PC-9 (cell line): ENCODE measurements at regions of chr3 and their contacts with region 1.

Region 1: GRCh38 chr3:105366326-105367062 is at the start of gene ALCAM:
- DNase-seq: peak; percentile 93 to 99
- H3K4me3 ChIP-seq: peak within 1 kb of the TSS; percentile 78
- H3K27ac ChIP-seq: peak within 1 kb of the TSS; percentile 86
- H3K4me1 ChIP-seq: peaks cover 29% of the 10 kb centered on the region
- H3K27me3 ChIP-seq: no peaks in the 10 kb centered on the region
- CTCF ChIP-seq: peak; percentile 70
- total RNA-seq, gene ALCAM: 110 and 132 TPM in 2 replicates

Region 2: DNA sequence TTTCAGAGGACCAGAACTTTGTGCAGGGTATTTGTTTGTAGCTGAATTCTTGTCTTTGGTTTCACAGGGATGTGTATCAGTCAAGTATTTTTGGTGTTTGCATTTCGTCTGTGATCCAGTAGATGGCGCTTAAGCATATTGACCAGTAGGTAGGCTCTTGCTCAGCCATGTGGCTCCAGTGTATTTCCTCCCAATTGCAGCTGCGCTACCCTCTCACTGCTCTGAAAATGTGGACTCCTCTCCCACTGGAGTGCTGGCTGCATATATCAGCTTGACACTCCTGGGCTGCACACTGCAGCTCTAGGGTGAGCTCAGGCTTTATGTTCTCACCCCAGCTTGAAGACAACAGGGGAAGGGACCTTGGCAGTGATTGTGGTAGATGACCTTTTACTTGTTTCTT is 1264.1 kb before region 1 on chr3:
- CTCF ChIA-PET with region 1: no interaction called
- POLR2A ChIA-PET with region 1: no interaction called
- intact Hi-C with region 1: loop called (anchors 2 kb)
- DNase-seq: peak in 1 of 2 experiments; percentile 21
- H3K4me3 ChIP-seq: no peak overlapping the region
- H3K27ac ChIP-seq: no peak overlapping the region
- H3K4me1 ChIP-seq: no peaks in the 10 kb centered on the region
- H3K27me3 ChIP-seq: no peaks in the 10 kb centered on the region
- CTCF ChIP-seq: peak; percentile 85

Region 3: GRCh38 chr3:104596551-104596950 is 769.9 kb before region 1 on chr3:
- CTCF ChIA-PET with region 1: no interaction called
- POLR2A ChIA-PET with region 1: no interaction called
- intact Hi-C with region 1: loop called (anchors 1 kb)
- DNase-seq: peak in 1 of 2 experiments; percentile 20
- H3K4me3 ChIP-seq: no peak overlapping the region
- H3K27ac ChIP-seq: no peak overlapping the region
- H3K4me1 ChIP-seq: no peaks in the 10 kb centered on the region; the same call in 1 of the 2 replicates
- H3K27me3 ChIP-seq: no peaks in the 10 kb centered on the region
- CTCF ChIP-seq: peak; percentile 86

Region 4: GRCh38 chr3:104856743-104857142 is 509.8 kb before region 1 on chr3:
- CTCF ChIA-PET with region 1: no interaction called
- POLR2A ChIA-PET with region 1: no interaction called
- intact Hi-C with region 1: loop called (anchors 10 kb)
- DNase-seq: no peak
- H3K4me3 ChIP-seq: no peak overlapping the region
- H3K27ac ChIP-seq: no peak overlapping the region
- H3K4me1 ChIP-seq: no peaks in the 10 kb centered on the region
- H3K27me3 ChIP-seq: no peaks in the 10 kb centered on the region
- CTCF ChIP-seq: no peak

Region 5: GRCh38 chr3:105274958-105275357 is 91.5 kb before region 1 on chr3:
- CTCF ChIA-PET with region 1: no interaction called
- POLR2A ChIA-PET with region 1: interaction called, 10 read pairs
- intact Hi-C with region 1: loop called (anchors 1 kb)
- DNase-seq: peak; percentile 40 to 78
- H3K4me3 ChIP-seq: no peak overlapping the region
- H3K27ac ChIP-seq: peak overlapping the region; percentile 52
- H3K4me1 ChIP-seq: peaks cover 22% of the 10 kb centered on the region
- H3K27me3 ChIP-seq: no peaks in the 10 kb centered on the region
- CTCF ChIP-seq: no peak

Region 6: DNA sequence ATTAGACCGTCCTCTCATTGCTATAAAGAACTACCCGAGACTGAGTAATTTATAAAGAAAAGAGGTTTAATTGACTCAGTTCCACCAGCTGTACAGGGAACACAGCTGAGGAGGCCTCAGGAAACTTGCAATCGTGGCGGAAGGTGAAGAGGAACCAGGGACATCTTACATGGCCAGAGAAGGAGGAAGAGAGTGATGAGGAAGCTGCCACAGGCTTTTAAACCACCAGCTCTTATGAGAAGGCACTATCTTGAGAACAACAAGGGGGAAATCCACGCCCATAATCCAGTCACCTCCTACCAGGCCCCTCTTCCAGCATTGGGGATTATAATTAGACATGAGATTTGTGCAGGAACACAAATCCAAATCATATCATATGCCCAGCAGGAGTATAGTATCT is 138.7 kb after region 1 on chr3:
- CTCF ChIA-PET with region 1: no interaction called
- POLR2A ChIA-PET with region 1: no interaction called
- intact Hi-C with region 1: no loop called
- DNase-seq: no peak
- H3K4me3 ChIP-seq: no peak overlapping the region
- H3K27ac ChIP-seq: no peak overlapping the region
- H3K4me1 ChIP-seq: no peaks in the 10 kb centered on the region
- H3K27me3 ChIP-seq: no peaks in the 10 kb centered on the region
- CTCF ChIP-seq: no peak

Region 7: GRCh38 chr3:105613120-105613519 is 246.6 kb after region 1 on chr3:
- CTCF ChIA-PET with region 1: no interaction called
- POLR2A ChIA-PET with region 1: no interaction called
- intact Hi-C with region 1: loop called (anchors 5 kb)
- DNase-seq: no peak
- H3K4me3 ChIP-seq: no peak overlapping the region
- H3K27ac ChIP-seq: no peak overlapping the region
- H3K4me1 ChIP-seq: peaks cover 26% of the 10 kb centered on the region
- H3K27me3 ChIP-seq: no peaks in the 10 kb centered on the region
- CTCF ChIP-seq: no peak

Region 8: DNA sequence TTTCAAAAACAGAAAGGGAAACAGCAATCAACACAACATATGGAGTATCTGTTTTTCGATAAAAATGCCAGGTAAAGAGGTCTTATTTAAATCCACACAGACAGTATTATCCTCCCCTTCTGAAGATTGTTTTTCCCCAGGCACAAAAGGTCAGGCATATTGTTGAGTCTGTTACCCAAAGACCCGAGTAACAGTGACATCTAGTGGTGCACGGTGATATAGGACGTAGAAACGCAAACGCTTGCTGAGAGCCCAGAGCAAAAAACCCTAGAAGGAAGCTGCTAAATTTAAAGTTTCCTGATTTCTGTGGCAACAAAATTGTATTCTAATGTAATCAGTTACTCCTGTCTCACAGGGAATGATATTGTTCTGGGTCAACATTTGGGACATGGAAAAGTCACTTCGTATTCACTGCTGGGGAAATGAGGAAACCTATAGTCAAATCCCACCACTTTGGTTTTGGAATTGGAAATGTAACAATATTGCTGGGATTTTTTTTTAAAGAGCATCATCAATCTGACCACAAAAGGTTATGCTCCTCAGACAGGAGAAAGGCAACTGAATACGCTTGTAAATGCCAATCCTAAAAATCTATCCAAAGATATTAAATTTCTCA is 1698.1 kb after region 1 on chr3:
- CTCF ChIA-PET with region 1: no interaction called
- POLR2A ChIA-PET with region 1: no interaction called
- intact Hi-C with region 1: loop called (anchors 2 kb)
- DNase-seq: peak; percentile 57 to 71
- H3K4me3 ChIP-seq: no peak overlapping the region
- H3K27ac ChIP-seq: no peak overlapping the region
- H3K4me1 ChIP-seq: no peaks in the 10 kb centered on the region
- H3K27me3 ChIP-seq: no peaks in the 10 kb centered on the region
- CTCF ChIP-seq: peak; percentile 98